ENCODE measurements at regions of chr5 and their contacts with region 1.

Region 1: DNA sequence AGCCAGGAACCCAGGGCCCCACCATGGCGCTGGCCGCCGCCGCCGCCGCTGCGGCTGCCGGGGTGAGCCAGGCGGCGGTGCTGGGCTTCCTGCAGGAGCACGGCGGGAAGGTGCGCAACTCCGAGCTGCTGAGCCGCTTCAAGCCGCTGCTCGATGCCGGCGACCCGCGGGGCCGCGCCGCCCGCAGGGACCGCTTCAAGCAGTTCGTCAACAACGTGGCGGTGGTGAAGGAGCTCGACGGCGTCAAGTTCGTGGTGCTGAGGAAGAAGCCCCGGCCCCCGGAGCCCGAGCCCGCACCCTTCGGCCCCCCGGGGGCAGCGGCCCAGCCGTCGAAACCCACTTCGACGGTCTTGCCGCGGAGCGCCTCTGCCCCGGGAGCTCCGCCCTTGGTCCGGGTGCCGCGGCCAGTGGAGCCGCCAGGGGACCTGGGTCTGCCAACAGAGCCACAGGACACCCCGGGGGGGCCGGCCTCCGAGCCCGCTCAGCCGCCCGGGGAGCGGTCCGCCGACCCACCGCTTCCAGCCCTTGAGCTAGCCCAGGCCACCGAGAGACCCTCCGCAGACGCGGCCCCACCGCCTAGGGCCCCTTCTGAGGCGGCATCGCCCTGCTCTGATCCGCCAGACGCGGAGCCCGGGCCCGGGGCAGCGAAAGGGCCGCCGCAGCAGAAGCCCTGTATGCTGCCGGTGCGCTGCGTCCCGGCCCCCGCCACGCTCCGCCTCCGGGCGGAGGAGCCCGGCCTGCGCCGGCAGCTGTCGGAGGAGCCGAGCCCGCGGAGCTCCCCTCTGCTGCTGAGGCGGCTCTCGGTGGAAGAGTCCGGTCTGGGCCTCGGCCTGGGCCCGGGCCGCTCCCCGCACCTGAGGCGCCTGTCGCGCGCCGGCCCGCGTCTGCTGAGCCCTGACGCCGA is 749 bp downstream of the SOWAHA start:
- DNase-seq: peak in 5 of 9 donors; percentile 28 to 49 (median 43)
- ATAC-seq: peak; percentile 63
- H3K4me3 ChIP-seq: no peak overlapping the region
- H3K4me3 Mint-ChIP-seq: peak overlapping the region in 3 of 10 donors; percentile 41 to 83 (median 61)
- H3K27ac ChIP-seq: no peak overlapping the region
- H3K27ac Mint-ChIP-seq: no peak overlapping the region
- H3K4me1 ChIP-seq: no peaks in the 10 kb centered on the region
- H3K4me1 Mint-ChIP-seq: peaks cover 10 to 14% (median 11%) of the 10 kb centered on the region in 7 donors
- H3K27me3 ChIP-seq: peaks cover 4 to 12% of the 10 kb centered on the region in 2 donors
- H3K27me3 Mint-ChIP-seq: peaks cover 41 to 63% (median 42%) of the 10 kb centered on the region in 5 donors

Region 2: GRCh38 chr5:130815246-130815645 is 1998.6 kb before region 1 on chr5:
- CTCF ChIA-PET with region 1: no interaction called
- POLR2A ChIA-PET with region 1: no interaction called
- intact Hi-C with region 1: no loop called
- DNase-seq: no peak
- ATAC-seq: no peak
- H3K4me3 ChIP-seq: no peak overlapping the region
- H3K4me3 Mint-ChIP-seq: no peak overlapping the region
- H3K27ac ChIP-seq: no peak overlapping the region
- H3K27ac Mint-ChIP-seq: no peak overlapping the region
- H3K4me1 ChIP-seq: no peaks in the 10 kb centered on the region
- H3K4me1 Mint-ChIP-seq: peaks cover 0 to 9% (median 4%) of the 10 kb centered on the region in 7 donors
- H3K27me3 ChIP-seq: no peaks in the 10 kb centered on the region
- H3K27me3 Mint-ChIP-seq: no peaks in the 10 kb centered on the region

Region 3: DNA sequence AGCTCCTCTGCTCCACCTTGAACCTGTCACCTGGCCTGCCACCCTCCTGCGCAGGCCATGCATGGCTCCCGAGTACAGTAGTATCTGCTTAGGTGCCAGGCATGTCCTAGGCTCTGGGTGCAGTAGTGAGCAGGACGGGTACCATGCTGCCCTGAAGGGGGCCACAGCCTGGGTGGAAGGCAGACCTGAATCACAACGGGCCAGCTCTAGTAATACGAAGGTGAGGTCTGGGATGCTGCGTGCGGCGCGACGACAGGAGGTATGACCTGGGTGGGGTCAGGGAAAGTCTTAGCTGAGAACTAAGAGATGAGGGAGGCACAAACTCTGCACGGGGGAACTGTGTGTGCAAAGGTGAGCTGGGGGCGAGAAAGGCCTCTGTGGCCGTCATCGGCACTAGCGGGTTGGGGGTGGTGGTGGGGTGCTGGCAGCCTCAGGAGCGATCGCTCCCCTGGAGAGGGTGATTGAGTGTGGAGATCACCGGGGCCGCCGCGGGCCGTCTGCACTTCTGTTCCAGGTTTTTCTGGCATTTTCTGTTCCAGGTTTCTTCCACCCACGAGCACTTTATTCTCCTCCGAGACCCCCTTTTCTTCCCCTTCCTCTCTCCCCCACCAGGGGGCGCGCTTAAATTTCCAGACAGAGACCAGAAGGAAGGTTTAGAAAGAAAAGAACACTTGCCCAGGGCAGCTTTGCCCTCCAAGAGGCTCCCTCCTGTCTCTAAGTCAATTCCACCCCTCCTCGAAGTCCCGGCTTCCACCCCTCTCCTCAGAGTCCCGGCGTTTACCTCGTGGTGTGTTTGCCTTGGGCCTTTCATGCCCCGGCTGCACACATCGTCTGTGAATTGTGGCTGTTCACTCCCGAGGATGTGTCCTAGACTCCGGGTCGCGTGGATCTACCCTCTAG is 541.3 kb before region 1 on chr5:
- CTCF ChIA-PET with region 1: no interaction called
- POLR2A ChIA-PET with region 1: no interaction called
- intact Hi-C with region 1: loop called in 1 of 2 experiments (anchors 10 kb)
- DNase-seq: peak; percentile 21 to 72 (median 49)
- ATAC-seq: peak; percentile 42
- H3K4me3 ChIP-seq: no peak overlapping the region
- H3K4me3 Mint-ChIP-seq: peak overlapping the region in 6 of 10 donors; percentile 25 to 80 (median 54)
- H3K27ac ChIP-seq: no peak overlapping the region
- H3K27ac Mint-ChIP-seq: peak overlapping the region in 1 of 9 donors; percentile 52
- H3K4me1 ChIP-seq: peaks cover 0 to 4% of the 10 kb centered on the region in 2 donors
- H3K4me1 Mint-ChIP-seq: peaks cover 0 to 16% (median 12%) of the 10 kb centered on the region in 7 donors
- H3K27me3 ChIP-seq: no peaks in the 10 kb centered on the region
- H3K27me3 Mint-ChIP-seq: peaks cover 10 to 31% (median 14%) of the 10 kb centered on the region in 5 donors

Region 4: DNA sequence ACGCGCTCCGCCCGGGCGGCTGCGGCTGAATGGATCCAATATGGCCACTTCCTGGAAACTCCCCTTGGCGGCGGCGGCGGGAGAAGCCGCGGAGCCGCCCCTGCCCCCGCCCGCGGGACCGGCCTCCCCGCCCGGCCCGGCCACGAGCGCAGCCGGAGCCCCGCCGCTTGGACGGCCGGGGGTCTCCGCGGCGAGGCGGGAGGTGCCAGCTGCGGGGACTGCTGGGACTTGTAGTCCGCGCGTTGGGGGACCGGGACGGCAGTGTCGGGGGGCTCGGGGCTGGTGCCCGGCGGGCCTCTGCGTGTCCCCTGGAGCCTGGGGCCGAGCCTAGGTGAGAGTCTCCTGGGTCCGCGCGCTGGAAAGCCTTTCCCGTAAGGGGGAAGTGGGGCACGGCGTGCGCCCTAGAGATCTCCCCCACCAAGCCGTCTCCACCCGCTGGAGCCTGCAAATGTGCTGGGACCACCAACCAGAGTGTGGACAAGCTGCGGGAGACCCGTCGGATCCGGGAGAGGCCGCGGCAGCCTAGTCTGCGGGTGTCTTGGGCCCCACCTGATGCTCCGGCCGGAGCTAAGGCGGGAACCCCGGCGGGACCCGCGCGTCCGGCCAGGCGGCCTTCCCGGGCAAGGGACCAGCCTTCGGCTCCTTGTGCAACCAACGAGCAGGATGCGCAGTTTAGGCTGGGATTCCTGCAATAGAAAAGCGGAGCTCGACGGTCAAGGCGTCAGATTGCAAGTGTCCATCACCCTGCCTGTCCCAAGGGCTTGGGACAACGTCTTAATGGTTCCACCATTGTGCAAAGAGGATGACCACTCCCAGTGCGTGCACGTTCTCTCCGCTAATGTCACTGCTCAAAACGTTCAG is 36.4 kb before region 1 on chr5 and contains the start of gene SEPTIN8:
- CTCF ChIA-PET with region 1: no interaction called
- POLR2A ChIA-PET with region 1: no interaction called
- intact Hi-C with region 1: loop called in 1 of 2 experiments (anchors 5 kb)
- DNase-seq: peak in 7 of 9 donors; percentile 1 to 70 (median 26)
- ATAC-seq: peak; percentile 72
- H3K4me3 ChIP-seq: peak within 1 kb of the TSS; percentile 68
- H3K4me3 Mint-ChIP-seq: peak within 1 kb of the TSS; percentile 71 to 91 (median 84)
- H3K27ac ChIP-seq: no peak within 1 kb of the TSS
- H3K27ac Mint-ChIP-seq: peak within 1 kb of the TSS in 5 of 9 donors; percentile 20 to 85 (median 56)
- H3K4me1 ChIP-seq: peaks cover 7 to 15% of the 10 kb centered on the region in 2 donors
- H3K4me1 Mint-ChIP-seq: peaks cover 0 to 41% (median 26%) of the 10 kb centered on the region in 7 donors
- H3K27me3 ChIP-seq: peaks cover 0 to 8% of the 10 kb centered on the region in 2 donors
- H3K27me3 Mint-ChIP-seq: peaks cover 33 to 63% (median 45%) of the 10 kb centered on the region in 5 donors
- total RNA-seq, gene SEPTIN8: 2.7 to 42.1 (median 5.2) TPM

Region 5: GRCh38 chr5:132829742-132830435 is 16.0 kb after region 1 on chr5:
- CTCF ChIA-PET with region 1: interaction called, 7 read pairs
- POLR2A ChIA-PET with region 1: interaction called, 3 read pairs
- intact Hi-C with region 1: loop called in 1 of 2 experiments (anchors 1 kb)
- DNase-seq: peak; percentile 43 to 78 (median 65)
- ATAC-seq: peak; percentile 93
- H3K4me3 ChIP-seq: peak overlapping the region; percentile 65
- H3K4me3 Mint-ChIP-seq: peak overlapping the region; percentile 79 to 93 (median 88)
- H3K27ac ChIP-seq: no peak overlapping the region
- H3K27ac Mint-ChIP-seq: peak overlapping the region in 3 of 9 donors; percentile 49 to 67 (median 52)
- H3K4me1 ChIP-seq: no peaks in the 10 kb centered on the region
- H3K4me1 Mint-ChIP-seq: peaks cover 0 to 19% (median 12%) of the 10 kb centered on the region in 7 donors
- H3K27me3 ChIP-seq: peaks cover 2 to 12% of the 10 kb centered on the region in 2 donors
- H3K27me3 Mint-ChIP-seq: peaks cover 35 to 62% (median 42%) of the 10 kb centered on the region in 5 donors

Measured in naive thymus-derived CD4-positive, alpha-beta T cell (primary cell).